ENCODE measurements at regions of chr21 and their contacts with region 1.

Region 1: GRCh38 chr21:46317710-46318473 is 5.8 kb downstream of the C21orf58 start:
- DNase-seq: no peak
- ATAC-seq: peak; percentile 25; the same call in 1 of the 2 replicates
- H3K4me3 ChIP-seq: no peak overlapping the region
- H3K27ac ChIP-seq: no peak overlapping the region
- H3K4me1 ChIP-seq: peaks cover 17% of the 10 kb centered on the region
- H3K27me3 ChIP-seq: no peaks in the 10 kb centered on the region
- CTCF ChIP-seq: no peak

Region 2: GRCh38 chr21:46307625-46308024 is 10.3 kb before region 1 on chr21:
- CTCF ChIA-PET with region 1: no interaction called
- POLR2A ChIA-PET with region 1: interaction called, 29 read pairs
- intact Hi-C with region 1: no loop called
- DNase-seq: peak; percentile 73
- ATAC-seq: peak; percentile 98
- H3K4me3 ChIP-seq: no peak overlapping the region
- H3K27ac ChIP-seq: no peak overlapping the region
- H3K4me1 ChIP-seq: peaks cover 10% of the 10 kb centered on the region
- H3K27me3 ChIP-seq: no peaks in the 10 kb centered on the region
- CTCF ChIP-seq: no peak